Activated B cell treated with CpG ODN at 0.5 μM for 24 hours (primary cell): ENCODE measurements at regions of chr5 and their contacts with region 1.

Region 1: GRCh38 chr5:150624334-150625163 is 15.9 kb upstream of the SYNPO start:
- DNase-seq: peak; percentile 44
- ATAC-seq: peak; percentile 23
- H3K4me3 Mint-ChIP-seq: peak overlapping the region; percentile 94
- H3K27ac Mint-ChIP-seq: peak overlapping the region; percentile 76
- H3K4me1 Mint-ChIP-seq: peaks cover 57% of the 10 kb centered on the region
- H3K27me3 Mint-ChIP-seq: no peaks in the 10 kb centered on the region
- CTCF ChIP-seq: no peak

Region 2: DNA sequence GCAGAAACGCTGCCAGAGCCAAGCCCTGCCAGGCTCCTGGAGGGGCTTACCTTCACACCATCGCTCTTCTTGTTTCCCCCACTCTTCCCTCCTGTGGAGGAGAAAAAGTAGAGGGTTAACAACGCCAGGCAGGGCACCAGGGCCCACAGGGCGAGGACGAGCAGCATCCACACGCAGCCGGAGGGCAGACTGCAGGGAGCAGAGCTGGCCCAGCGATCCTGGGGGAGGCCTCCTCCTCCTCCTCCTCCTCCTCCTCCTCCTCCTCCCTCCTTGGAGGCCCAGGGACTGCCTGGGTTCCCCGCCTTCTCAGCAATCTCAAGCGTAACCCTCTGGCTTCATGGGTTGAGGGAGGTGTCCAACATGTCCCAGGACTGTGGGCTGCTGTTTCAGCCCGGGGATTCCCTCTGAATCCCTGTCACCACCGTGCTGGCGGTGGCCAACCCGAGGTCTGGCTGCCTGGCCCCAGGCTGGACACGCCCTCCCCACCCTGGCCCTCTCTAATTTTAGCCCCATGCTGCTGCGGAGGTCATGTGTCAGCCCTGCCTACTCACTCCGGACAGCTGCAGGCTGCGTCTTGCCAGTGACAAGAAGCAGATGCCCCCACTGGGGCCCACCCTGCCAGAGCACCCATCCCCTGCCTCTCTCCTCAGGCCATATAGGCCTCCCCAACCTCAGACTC is 379.3 kb before region 1 on chr5:
- CTCF ChIA-PET with region 1: no interaction called
- POLR2A ChIA-PET with region 1: no interaction called
- intact Hi-C with region 1: no loop called
- DNase-seq: no peak
- ATAC-seq: no peak
- H3K4me3 Mint-ChIP-seq: no peak overlapping the region
- H3K27ac Mint-ChIP-seq: no peak overlapping the region
- H3K4me1 Mint-ChIP-seq: no peaks in the 10 kb centered on the region
- H3K27me3 Mint-ChIP-seq: peaks cover 7% of the 10 kb centered on the region
- CTCF ChIP-seq: no peak

Region 3: DNA sequence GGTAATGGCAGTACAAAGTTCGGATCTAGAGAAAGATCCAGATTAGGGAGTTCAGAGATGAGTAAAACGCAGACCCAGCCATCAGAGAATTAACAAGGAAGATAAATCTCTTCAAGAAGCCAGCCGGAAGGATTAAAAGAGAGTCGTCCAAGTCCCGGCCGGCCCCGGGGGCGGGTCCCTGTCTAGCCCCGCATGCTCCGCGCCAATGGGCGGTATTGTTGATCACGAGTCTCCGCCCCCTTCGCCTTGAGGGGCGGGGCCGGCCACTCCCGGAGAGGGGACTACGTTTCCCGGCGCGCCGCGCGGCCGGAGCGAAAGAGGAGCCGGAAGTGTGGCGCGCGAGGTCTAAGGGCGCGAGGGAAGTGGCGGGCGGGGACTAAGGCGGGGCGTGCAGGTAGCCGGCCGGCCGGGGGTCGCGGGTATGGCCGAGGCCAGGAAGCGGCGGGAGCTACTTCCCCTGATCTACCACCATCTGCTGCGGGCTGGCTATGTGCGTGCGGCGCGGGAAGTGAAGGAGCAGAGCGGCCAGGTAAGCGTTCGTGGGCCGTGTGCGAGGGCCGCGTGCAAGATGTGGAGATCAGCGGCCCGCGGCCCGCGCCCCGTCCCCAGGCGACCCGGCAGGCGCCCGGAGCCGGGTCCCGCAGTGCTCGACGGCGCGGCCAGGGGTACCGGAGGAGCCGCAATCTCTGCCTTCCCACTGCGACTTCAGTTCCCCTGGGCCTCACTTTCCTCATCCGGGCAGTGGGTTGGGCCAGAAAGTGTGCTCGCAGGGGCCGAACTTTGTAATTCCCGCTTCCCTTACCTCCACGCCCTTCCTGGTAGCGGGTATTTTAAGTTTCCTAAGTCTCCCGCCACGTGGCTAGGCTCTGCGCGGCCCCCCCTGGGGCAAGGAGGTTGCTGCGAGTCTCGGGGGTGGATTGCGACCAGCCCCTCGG is 267.0 kb before region 1 on chr5 and contains the start of gene TCOF1:
- CTCF ChIA-PET with region 1: no interaction called
- POLR2A ChIA-PET with region 1: no interaction called
- intact Hi-C with region 1: loop called (anchors 2 kb)
- DNase-seq: peak; percentile 98
- ATAC-seq: peak; percentile 97
- H3K4me3 Mint-ChIP-seq: peak within 1 kb of the TSS; percentile 89
- H3K27ac Mint-ChIP-seq: peak within 1 kb of the TSS; percentile 93
- H3K4me1 Mint-ChIP-seq: peaks cover 49% of the 10 kb centered on the region
- H3K27me3 Mint-ChIP-seq: no peaks in the 10 kb centered on the region
- CTCF ChIP-seq: no peak
- total RNA-seq, gene TCOF1: 74.7 and 76.1 TPM in 2 replicates

Region 4: DNA sequence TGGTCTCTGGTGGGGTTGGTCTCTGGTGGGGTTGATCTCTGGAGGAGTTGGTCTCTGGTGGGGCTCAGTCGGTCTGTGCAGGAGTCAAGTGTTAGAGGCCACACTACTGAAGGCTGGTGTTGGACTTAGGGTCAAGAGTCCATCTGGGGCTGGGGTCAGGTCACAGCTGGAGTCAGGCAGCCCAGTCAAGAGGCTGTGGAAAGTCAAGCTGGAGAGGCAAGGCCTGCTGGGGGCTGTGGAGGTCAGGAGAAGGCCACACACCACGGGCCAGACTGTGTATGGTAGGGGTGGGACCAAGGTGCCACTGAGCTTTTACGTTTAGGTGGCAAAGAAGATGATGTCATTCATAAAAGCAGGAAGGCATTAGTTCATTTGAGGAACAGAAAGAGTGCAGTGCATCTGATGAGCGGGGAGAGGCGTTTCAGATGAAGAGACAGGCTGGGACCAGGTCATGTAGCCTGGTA is 195.1 kb before region 1 on chr5:
- CTCF ChIA-PET with region 1: no interaction called
- POLR2A ChIA-PET with region 1: no interaction called
- intact Hi-C with region 1: no loop called
- DNase-seq: no peak
- ATAC-seq: peak; percentile 97
- H3K4me3 Mint-ChIP-seq: peak overlapping the region; percentile 53
- H3K27ac Mint-ChIP-seq: peak overlapping the region; percentile 94
- H3K4me1 Mint-ChIP-seq: peaks cover 67% of the 10 kb centered on the region
- H3K27me3 Mint-ChIP-seq: no peaks in the 10 kb centered on the region
- CTCF ChIP-seq: no peak

Region 5: DNA sequence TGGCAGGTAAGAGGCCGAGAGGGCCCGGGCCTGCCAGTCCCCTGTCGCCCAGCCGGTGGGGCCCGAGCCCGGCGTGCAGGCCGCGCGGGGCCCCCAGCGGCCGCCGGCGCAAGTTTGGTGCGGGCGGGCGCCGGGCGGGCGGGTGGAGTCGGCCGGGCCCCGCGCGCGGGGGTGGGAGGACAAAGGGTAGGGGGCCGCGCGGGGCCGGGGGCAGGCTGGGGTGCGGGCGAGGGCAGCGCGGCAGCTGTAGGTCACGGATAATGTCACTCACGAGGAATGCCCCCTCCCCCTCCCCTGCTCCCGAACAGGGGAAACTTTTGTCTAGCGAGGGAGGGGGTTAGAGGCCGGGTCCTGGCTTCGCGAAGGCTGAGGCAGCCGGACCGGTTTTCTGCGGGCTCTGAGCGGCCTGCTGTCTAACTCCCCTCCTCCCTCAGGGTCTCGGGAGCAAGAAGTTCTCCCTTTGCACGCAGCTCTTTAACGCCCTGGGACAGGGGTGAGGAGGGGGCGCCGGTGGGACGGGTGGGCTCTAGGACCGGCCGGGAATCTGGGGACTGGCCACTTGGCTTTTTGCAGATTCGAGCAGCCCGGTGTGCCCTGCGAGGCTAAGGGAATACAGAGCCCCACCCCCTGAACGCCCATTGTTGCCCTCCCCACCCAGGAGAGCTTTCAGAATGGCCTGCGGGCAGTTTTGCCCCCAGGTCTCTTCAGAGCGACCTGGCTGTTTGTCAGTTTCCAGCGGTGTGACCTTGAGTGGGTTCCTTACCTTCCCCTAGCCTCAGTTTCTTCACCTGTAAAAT is 137.9 kb before region 1 on chr5:
- CTCF ChIA-PET with region 1: no interaction called
- POLR2A ChIA-PET with region 1: no interaction called
- intact Hi-C with region 1: loop called (anchors 5 kb)
- DNase-seq: peak; percentile 76
- ATAC-seq: peak; percentile 38
- H3K4me3 Mint-ChIP-seq: peak overlapping the region; percentile 79
- H3K27ac Mint-ChIP-seq: peak overlapping the region; percentile 85
- H3K4me1 Mint-ChIP-seq: peaks cover 53% of the 10 kb centered on the region
- H3K27me3 Mint-ChIP-seq: no peaks in the 10 kb centered on the region
- CTCF ChIP-seq: no peak

Region 6: GRCh38 chr5:150589871-150590601 is 34.5 kb before region 1 on chr5:
- CTCF ChIA-PET with region 1: no interaction called
- POLR2A ChIA-PET with region 1: no interaction called
- intact Hi-C with region 1: no loop called
- DNase-seq: no peak
- ATAC-seq: no peak
- H3K4me3 Mint-ChIP-seq: no peak overlapping the region
- H3K27ac Mint-ChIP-seq: no peak overlapping the region
- H3K4me1 Mint-ChIP-seq: no peaks in the 10 kb centered on the region
- H3K27me3 Mint-ChIP-seq: peaks cover 3% of the 10 kb centered on the region
- CTCF ChIP-seq: no peak

Region 7: DNA sequence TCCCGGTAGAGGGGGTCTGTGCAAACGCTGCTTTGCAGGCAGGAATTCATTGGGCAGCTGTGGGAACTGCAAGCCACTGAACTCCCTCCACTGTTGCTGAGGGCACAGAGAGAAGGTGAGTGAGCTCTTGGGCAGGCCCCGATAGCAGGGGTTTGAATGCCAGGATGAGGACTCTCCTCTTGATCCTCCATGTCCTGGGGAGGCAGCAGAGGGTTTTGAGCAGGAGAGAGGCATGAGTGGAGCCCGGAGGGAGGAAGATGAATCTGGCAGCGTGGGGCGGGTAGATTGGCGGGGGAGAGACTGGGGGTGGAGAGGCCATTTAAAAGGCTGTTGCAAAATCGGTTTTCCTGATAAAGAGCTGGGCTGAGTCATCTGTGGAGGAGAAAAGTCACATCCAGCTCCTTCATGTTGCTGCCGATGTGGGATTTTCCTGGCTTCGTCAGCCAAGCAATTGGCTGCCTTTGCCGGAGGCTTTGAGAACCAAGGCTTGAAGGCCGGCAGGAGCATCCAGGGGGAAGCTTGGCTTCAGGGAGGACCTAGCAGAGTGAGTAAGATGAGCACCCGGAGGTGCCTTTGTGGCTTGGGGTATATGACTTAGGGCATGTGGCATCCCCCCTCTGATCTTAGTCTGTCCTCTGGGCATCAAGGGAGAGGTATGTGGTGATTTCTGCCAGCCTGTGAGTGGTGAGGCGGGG is 15.9 kb after region 1 on chr5 and contains the start of gene SYNPO:
- CTCF ChIA-PET with region 1: no interaction called
- POLR2A ChIA-PET with region 1: interaction called, 5 read pairs
- intact Hi-C with region 1: loop called (anchors 1 kb)
- DNase-seq: no peak
- ATAC-seq: no peak
- H3K4me3 Mint-ChIP-seq: no peak within 1 kb of the TSS
- H3K27ac Mint-ChIP-seq: no peak within 1 kb of the TSS
- H3K4me1 Mint-ChIP-seq: no peaks in the 10 kb centered on the region
- H3K27me3 Mint-ChIP-seq: no peaks in the 10 kb centered on the region
- CTCF ChIP-seq: no peak
- total RNA-seq, gene SYNPO: 49.2 and 49.3 TPM in 2 replicates

Region 8: GRCh38 chr5:150656191-150657132 is 31.9 kb after region 1 on chr5:
- CTCF ChIA-PET with region 1: interaction called, 3 read pairs
- POLR2A ChIA-PET with region 1: interaction called, 12 read pairs
- intact Hi-C with region 1: loop called (anchors 1 kb)
- DNase-seq: peak; percentile 84
- ATAC-seq: peak; percentile 93
- H3K4me3 Mint-ChIP-seq: peak overlapping the region; percentile 81
- H3K27ac Mint-ChIP-seq: no peak overlapping the region
- H3K4me1 Mint-ChIP-seq: peaks cover 16% of the 10 kb centered on the region
- H3K27me3 Mint-ChIP-seq: no peaks in the 10 kb centered on the region
- CTCF ChIP-seq: peak; percentile 23

Region 9: DNA sequence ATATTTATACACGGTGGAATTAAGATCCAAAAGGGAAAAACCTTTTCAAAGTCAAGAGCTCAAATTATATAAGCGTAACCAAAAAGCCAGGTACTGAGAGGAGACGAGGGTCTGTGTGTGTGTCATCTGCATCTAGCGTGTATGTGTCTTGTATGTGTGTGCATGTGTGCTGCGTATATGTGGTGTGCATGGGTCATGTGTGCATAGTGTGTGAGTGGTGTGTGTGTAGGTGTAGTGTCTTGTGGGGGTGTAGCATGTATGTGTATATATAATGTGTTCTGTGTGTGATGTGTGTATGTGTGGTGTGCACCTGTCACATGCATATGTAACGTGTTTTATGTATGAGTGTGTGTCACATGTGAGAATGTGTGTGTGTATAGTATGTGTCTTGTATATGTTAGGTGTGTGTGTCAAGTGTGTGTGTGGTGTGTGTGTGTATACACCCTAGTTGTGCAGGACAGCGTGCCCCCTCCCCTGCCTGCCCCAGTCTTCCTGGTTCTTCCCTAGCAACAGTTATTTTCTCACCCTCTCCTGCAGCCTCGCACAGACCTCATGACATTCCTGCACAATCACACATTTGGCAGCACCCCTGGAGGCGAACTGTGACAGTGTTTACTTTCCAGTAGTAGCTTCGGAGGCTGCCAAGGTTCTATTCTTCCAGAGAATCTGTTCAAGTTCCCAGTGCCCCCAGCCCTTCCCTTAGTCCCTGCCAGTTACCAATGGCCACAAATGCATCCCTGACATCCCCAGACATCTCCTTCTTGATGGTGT is 483.4 kb after region 1 on chr5:
- CTCF ChIA-PET with region 1: no interaction called
- POLR2A ChIA-PET with region 1: no interaction called
- intact Hi-C with region 1: no loop called
- DNase-seq: no peak
- ATAC-seq: no peak
- H3K4me3 Mint-ChIP-seq: no peak overlapping the region
- H3K27ac Mint-ChIP-seq: no peak overlapping the region
- H3K4me1 Mint-ChIP-seq: peaks cover 23% of the 10 kb centered on the region
- H3K27me3 Mint-ChIP-seq: no peaks in the 10 kb centered on the region
- CTCF ChIP-seq: no peak